A549 (cell line): ENCODE measurements at regions of chr3 and their contacts with region 1.

Region 1: GRCh38 chr3:158434412-158435038 is 136.5 kb upstream of the MLF1 start:
- DNase-seq: peak; percentile 5 to 72
- ATAC-seq: peak; percentile 94 to 99
- H3K4me3 ChIP-seq: no peak overlapping the region
- H3K27ac ChIP-seq: no peak overlapping the region
- H3K4me1 ChIP-seq: peaks cover 7% of the 10 kb centered on the region; the same call in 2 of the 3 replicates
- CTCF ChIP-seq: peak; percentile 91
- EP300 ChIP-seq: no peak
- POLR2A ChIP-seq: no peak
- RAD21 ChIP-seq: peak; percentile 89 to 90

Region 2: GRCh38 chr3:157606011-157606851 is 828.3 kb before region 1 on chr3:
- CTCF ChIA-PET with region 1: interaction called, 28 read pairs
- POLR2A ChIA-PET with region 1: no interaction called
- DNase-seq: peak; percentile 64 to 70
- ATAC-seq: peak; percentile 94 to 99
- H3K4me3 ChIP-seq: no peak overlapping the region
- H3K27ac ChIP-seq: no peak overlapping the region
- H3K4me1 ChIP-seq: no peaks in the 10 kb centered on the region
- CTCF ChIP-seq: peak; percentile 66
- EP300 ChIP-seq: no peak
- POLR2A ChIP-seq: no peak
- RAD21 ChIP-seq: peak; percentile 48 to 57; a peak in 4 of 5 replicates

Region 3: GRCh38 chr3:157618075-157618760 is 816.3 kb before region 1 on chr3:
- CTCF ChIA-PET with region 1: interaction called, 15 read pairs
- POLR2A ChIA-PET with region 1: no interaction called
- DNase-seq: peak; percentile 37 to 56
- ATAC-seq: peak; percentile 45 to 72; a peak in 5 of 6 replicates
- H3K4me3 ChIP-seq: 0 out of 3 replicates have a peak overlapping the region, but pooled peaks have one; percentile 16
- H3K27ac ChIP-seq: no peak overlapping the region
- H3K4me1 ChIP-seq: peaks cover 3% of the 10 kb centered on the region; the same call in 2 of the 3 replicates
- CTCF ChIP-seq: peak; percentile 86
- EP300 ChIP-seq: no peak
- POLR2A ChIP-seq: no peak
- RAD21 ChIP-seq: peak; percentile 74 to 83

Region 4: DNA sequence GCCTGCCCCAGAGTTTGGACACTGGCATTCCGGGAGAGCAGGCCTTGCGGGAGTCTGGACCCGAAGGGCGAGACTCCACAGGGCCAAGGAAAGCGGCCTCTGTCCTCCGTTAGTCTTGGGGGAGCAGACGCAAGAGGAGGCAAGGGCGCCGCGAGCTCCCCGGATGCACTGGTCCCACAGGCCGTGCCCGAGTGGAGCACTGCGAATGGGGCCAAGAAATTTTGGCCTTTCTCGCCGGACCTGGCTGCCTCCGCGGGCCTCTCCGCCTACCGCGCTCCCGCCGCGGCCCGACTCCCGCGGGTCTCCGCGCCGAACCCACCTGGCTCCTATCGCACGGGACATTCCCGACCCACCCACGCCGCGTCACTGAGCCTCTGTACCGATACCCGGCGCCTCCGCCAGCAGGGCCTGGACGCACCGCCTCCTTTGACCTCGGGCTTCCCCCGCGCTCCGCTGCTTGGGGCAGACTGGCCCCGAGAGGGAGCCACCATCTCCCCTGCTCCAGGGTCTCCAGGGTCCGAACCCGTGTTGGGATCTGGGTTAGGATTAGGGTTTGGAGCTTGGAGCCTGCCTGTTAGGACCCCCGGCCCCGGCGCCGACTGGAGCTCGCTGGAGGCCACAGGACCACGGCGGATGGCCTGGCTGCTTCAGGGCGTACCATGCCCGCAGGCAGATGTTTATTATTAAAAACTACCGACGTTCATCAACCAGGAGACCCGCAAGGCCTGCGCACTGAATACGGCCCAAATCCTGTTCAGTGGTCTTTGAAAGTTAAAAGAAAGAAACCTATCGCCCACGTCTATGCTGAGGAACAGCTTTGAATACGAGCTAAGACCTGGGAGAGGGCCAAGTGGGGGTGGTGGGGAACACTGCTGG is 340.1 kb before region 1 on chr3:
- CTCF ChIA-PET with region 1: interaction called, 12 read pairs
- POLR2A ChIA-PET with region 1: no interaction called
- DNase-seq: no peak
- ATAC-seq: no peak
- H3K4me3 ChIP-seq: no peak overlapping the region
- H3K27ac ChIP-seq: no peak overlapping the region
- H3K4me1 ChIP-seq: 0 out of 3 replicates have a peak, but pooled peaks cover 6% of the 10 kb centered on the region
- CTCF ChIP-seq: no peak
- EP300 ChIP-seq: no peak
- POLR2A ChIP-seq: no peak
- RAD21 ChIP-seq: no peak

Region 5: GRCh38 chr3:158420654-158421396 is 13.7 kb before region 1 on chr3:
- CTCF ChIA-PET with region 1: interaction called, 10 read pairs
- POLR2A ChIA-PET with region 1: no interaction called
- DNase-seq: peak; percentile 1 to 42
- ATAC-seq: peak; percentile 47 to 61; a peak in 2 of 6 replicates
- H3K4me3 ChIP-seq: no peak overlapping the region
- H3K27ac ChIP-seq: no peak overlapping the region
- H3K4me1 ChIP-seq: no peaks in the 10 kb centered on the region
- CTCF ChIP-seq: no peak
- EP300 ChIP-seq: no peak
- POLR2A ChIP-seq: no peak
- RAD21 ChIP-seq: no peak